Naive thymus-derived CD4-positive, alpha-beta T cell (primary cell): ENCODE measurements at regions of chr2 and their contacts with region 1.

Region 1: DNA sequence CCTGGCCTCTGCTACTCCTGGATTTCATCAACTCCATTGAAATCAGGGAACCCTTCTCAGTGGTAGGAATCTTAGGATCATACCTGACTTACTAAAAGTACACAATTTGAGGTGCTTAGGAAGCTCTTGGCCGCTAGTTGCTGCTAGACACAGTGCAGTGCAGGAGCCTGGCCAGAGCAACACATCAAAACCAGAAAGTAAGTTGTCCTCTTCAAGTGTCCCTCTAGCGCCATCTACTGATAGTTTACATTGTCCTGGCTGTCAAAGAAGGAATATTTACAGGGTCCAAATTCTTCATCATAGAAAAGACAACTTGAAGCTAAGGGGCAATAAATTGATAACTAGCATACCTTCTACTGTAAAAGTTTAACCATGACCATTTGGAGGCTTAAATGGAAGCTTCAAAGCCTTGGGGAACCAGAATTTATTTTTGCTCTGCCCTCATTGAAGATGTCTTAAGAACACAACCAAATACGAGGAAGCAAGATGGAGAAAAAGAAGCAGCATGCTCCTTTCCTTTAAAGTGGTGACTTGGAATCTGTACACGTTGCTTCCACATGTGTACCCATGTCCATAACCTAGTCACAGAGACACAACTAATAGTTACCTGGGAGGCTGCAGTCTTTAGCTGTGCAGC is 889.1 kb upstream of the GCFC2 start:
- DNase-seq: no peak
- ATAC-seq: no peak
- H3K4me3 ChIP-seq: no peak overlapping the region
- H3K4me3 Mint-ChIP-seq: no peak overlapping the region
- H3K27ac ChIP-seq: no peak overlapping the region
- H3K27ac Mint-ChIP-seq: no peak overlapping the region
- H3K4me1 ChIP-seq: no peaks in the 10 kb centered on the region
- H3K4me1 Mint-ChIP-seq: no peaks in the 10 kb centered on the region
- H3K27me3 ChIP-seq: no peaks in the 10 kb centered on the region
- H3K27me3 Mint-ChIP-seq: no peaks in the 10 kb centered on the region

Region 2: GRCh38 chr2:75640621-75641121 is 959.2 kb before region 1 on chr2:
- CTCF ChIA-PET with region 1: no interaction called
- POLR2A ChIA-PET with region 1: no interaction called
- intact Hi-C with region 1: loop called in 1 of 2 experiments (anchors 2 kb)
- DNase-seq: peak in 8 of 9 donors; percentile 5 to 44 (median 27)
- ATAC-seq: peak; percentile 96
- H3K4me3 ChIP-seq: no peak overlapping the region
- H3K4me3 Mint-ChIP-seq: no peak overlapping the region
- H3K27ac ChIP-seq: no peak overlapping the region
- H3K27ac Mint-ChIP-seq: no peak overlapping the region
- H3K4me1 ChIP-seq: no peaks in the 10 kb centered on the region
- H3K4me1 Mint-ChIP-seq: peaks cover 0 to 4% (median 0%) of the 10 kb centered on the region in 7 donors
- H3K27me3 ChIP-seq: no peaks in the 10 kb centered on the region
- H3K27me3 Mint-ChIP-seq: peaks cover 17 to 30% (median 25%) of the 10 kb centered on the region in 5 donors

Region 3: DNA sequence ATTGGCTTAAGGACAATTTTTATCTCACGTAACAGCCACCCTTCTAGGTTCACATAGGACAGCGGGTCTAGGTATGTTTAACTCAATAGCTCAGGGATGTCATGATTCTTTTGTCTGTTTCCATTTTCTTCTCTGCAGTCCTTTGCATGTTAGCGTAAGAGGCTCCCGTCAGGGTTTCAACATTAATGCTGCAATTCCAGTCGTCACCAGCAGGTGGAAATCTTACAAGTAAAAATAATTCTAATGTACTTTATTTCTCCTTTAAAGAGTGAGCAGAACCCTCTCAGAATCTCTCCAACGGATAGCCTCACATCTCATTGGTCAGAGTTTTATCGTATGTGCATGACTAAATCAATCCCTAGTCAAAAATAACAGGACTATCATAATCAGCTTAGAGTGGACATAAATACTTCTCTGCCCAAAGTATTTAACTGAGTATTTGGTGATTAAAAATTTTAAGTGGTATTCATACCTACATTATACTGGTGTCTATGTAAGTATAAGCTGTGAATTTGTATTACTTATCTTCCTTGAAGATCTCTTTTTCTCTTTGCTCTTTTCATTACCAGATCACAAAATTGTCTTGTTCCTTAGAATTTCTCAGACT is 401.9 kb before region 1 on chr2:
- CTCF ChIA-PET with region 1: no interaction called
- POLR2A ChIA-PET with region 1: no interaction called
- intact Hi-C with region 1: loop called in 1 of 2 experiments (anchors 1 kb)
- DNase-seq: peak in 6 of 9 donors; percentile 1 to 25 (median 5)
- ATAC-seq: no peak
- H3K4me3 ChIP-seq: no peak overlapping the region
- H3K4me3 Mint-ChIP-seq: no peak overlapping the region
- H3K27ac ChIP-seq: no peak overlapping the region
- H3K27ac Mint-ChIP-seq: no peak overlapping the region
- H3K4me1 ChIP-seq: no peaks in the 10 kb centered on the region
- H3K4me1 Mint-ChIP-seq: no peaks in the 10 kb centered on the region
- H3K27me3 ChIP-seq: no peaks in the 10 kb centered on the region
- H3K27me3 Mint-ChIP-seq: no peaks in the 10 kb centered on the region

Region 4: GRCh38 chr2:76491503-76491902 is 108.3 kb before region 1 on chr2:
- CTCF ChIA-PET with region 1: no interaction called
- POLR2A ChIA-PET with region 1: no interaction called
- intact Hi-C with region 1: no loop called
- DNase-seq: no peak
- ATAC-seq: no peak
- H3K4me3 ChIP-seq: no peak overlapping the region
- H3K4me3 Mint-ChIP-seq: no peak overlapping the region
- H3K27ac ChIP-seq: no peak overlapping the region
- H3K27ac Mint-ChIP-seq: no peak overlapping the region
- H3K4me1 ChIP-seq: no peaks in the 10 kb centered on the region
- H3K4me1 Mint-ChIP-seq: no peaks in the 10 kb centered on the region
- H3K27me3 ChIP-seq: no peaks in the 10 kb centered on the region
- H3K27me3 Mint-ChIP-seq: no peaks in the 10 kb centered on the region

Region 5: DNA sequence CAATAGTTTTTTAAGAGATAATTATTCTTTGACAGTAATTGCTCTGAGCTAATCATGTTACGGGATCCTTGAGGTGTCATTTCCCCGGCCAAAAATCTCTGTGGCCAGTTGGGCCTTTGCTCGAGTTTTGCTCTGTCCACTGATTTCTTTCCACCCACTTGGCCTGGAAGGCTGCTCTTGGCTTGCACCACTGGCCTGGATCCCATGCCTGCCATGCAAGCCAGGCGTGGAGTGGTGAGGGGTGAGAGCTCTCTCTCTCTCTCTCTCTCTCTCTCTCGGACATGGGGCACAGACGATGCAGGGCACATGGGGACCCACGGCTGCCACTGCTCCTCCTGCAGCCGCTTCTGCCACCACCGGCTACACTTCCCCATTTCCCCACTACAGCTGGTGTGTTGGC is 36.1 kb before region 1 on chr2:
- CTCF ChIA-PET with region 1: no interaction called
- POLR2A ChIA-PET with region 1: no interaction called
- intact Hi-C with region 1: no loop called
- DNase-seq: no peak
- ATAC-seq: no peak
- H3K4me3 ChIP-seq: no peak overlapping the region
- H3K4me3 Mint-ChIP-seq: no peak overlapping the region
- H3K27ac ChIP-seq: no peak overlapping the region
- H3K27ac Mint-ChIP-seq: no peak overlapping the region
- H3K4me1 ChIP-seq: no peaks in the 10 kb centered on the region
- H3K4me1 Mint-ChIP-seq: no peaks in the 10 kb centered on the region
- H3K27me3 ChIP-seq: no peaks in the 10 kb centered on the region
- H3K27me3 Mint-ChIP-seq: no peaks in the 10 kb centered on the region